Activated naive CD4-positive, alpha-beta T cell treated with anti-CD3 and anti-CD28 coated beads, Interleukin-2, amount 10 ng/mL, durations not matched to agents 7 days and 5 days (primary cell): ENCODE measurements at regions of chr3 and their contacts with region 1.

Region 1: DNA sequence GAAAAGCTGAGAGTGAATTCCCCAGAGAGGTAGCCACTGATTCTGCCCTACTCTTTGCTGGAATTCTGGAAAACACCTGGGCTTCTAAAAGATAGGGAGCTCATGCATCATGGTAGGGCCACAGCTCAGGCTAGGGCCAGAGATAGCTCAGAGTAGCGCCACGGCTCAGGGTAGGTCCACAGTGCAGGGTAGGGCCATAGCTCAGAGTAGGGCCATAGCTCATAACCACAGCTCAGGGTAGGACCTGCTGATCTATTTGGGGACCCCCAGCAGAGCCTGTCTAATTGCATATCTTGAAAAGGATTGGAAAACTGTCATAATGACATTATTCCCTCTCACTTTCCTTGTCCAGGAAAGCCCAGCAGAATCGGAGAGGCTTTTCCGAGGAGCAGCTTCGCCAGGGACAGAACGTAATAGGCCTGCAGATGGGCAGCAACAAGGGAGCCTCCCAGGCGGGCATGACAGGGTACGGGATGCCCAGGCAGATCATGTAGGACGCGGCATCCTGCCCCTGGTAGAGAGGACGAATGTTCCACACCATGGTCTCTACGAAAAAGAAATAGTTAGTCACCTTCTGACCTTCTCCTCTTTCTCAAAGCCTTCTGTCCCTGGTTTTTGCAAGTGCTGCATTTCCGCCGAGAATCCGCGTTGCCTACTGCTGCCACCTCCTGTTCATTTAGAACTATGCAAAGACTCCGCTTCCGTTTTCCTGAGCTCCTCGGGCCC is 14.5 kb downstream of the TAGLN3 start:
- DNase-seq: peak; percentile 67
- H3K4me3 Mint-ChIP-seq: no peak overlapping the region
- H3K27ac Mint-ChIP-seq: no peak overlapping the region
- H3K4me1 Mint-ChIP-seq: peaks cover 13% of the 10 kb centered on the region
- H3K27me3 Mint-ChIP-seq: no peaks in the 10 kb centered on the region

Region 2: DNA sequence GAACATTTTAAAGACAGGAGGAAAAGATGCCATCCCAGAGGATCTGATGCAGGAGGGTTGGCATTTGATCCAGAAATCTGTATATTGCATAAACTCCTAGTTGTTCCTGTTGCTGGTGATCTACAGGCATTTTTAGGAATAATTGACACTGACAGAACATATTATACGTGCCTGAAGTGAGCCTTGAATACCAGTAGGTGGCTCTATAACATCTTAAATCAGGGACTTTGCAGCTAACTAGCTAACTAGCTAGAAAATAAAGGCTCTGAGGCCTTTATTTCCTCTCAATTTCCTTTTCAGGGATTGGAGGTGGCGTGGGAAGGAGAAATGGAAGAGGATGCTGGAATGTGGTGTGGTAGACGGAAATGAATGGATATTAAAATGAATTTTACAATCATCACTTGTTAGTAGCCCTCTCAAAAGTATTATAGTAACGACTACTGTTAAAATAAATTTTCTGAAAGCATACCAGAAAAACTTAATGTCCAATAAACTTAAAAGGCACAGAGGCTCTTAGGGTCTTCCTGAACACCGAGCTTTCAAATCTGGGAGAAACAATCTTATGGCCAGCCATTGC is 344.2 kb before region 1 on chr3:
- CTCF ChIA-PET with region 1: interaction called, 19 read pairs
- DNase-seq: no peak
- H3K4me3 Mint-ChIP-seq: no peak overlapping the region
- H3K27ac Mint-ChIP-seq: peak overlapping the region; percentile 83
- H3K4me1 Mint-ChIP-seq: peaks cover 85% of the 10 kb centered on the region
- H3K27me3 Mint-ChIP-seq: no peaks in the 10 kb centered on the region

Region 3: GRCh38 chr3:111967651-111968274 is 45.5 kb before region 1 on chr3:
- CTCF ChIA-PET with region 1: interaction called, 37 read pairs
- DNase-seq: peak; percentile 87
- H3K4me3 Mint-ChIP-seq: no peak overlapping the region
- H3K27ac Mint-ChIP-seq: no peak overlapping the region
- H3K4me1 Mint-ChIP-seq: peaks cover 9% of the 10 kb centered on the region
- H3K27me3 Mint-ChIP-seq: peaks cover 5% of the 10 kb centered on the region

Region 4: GRCh38 chr3:111978493-111979433 is 34.5 kb before region 1 on chr3 and contains the start of gene ABHD10:
- CTCF ChIA-PET with region 1: interaction called, 42 read pairs
- DNase-seq: peak; percentile 98
- H3K4me3 Mint-ChIP-seq: peak within 1 kb of the TSS; percentile 87
- H3K27ac Mint-ChIP-seq: peak within 1 kb of the TSS; percentile 96
- H3K4me1 Mint-ChIP-seq: peaks cover 41% of the 10 kb centered on the region
- H3K27me3 Mint-ChIP-seq: peaks cover 12% of the 10 kb centered on the region

Region 5: DNA sequence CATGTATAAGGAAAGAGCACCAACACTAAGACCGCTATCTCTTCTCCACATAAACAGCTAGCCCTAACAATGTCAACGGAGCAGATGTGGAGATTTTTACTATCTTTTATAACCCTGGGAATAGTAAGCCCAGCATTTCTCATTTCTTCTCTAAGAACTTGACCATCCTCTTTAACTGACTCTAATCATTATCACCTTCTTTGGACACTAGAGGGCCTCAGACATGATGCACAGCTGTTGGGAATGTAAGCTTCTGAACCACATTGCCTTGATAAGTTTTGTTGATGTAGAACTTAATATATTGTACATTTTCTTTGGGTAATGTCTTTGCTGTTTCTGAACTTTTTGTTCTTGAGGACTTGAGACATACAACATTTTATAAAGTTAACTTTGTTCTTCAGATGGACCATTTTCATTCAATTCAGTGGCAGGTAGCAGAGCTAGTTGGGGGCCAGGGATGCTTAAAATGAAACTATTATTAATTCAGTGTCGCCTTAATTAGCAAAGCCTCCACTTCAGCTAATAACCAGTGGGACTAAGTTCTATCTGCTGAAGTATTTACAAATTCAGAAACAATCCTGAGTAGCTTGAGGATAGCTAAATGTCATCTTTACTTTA is 24.1 kb before region 1 on chr3:
- CTCF ChIA-PET with region 1: interaction called, 137 read pairs
- DNase-seq: no peak
- H3K4me3 Mint-ChIP-seq: no peak overlapping the region
- H3K27ac Mint-ChIP-seq: no peak overlapping the region
- H3K4me1 Mint-ChIP-seq: peaks cover 23% of the 10 kb centered on the region
- H3K27me3 Mint-ChIP-seq: no peaks in the 10 kb centered on the region

Region 6: GRCh38 chr3:111998636-111999483 is 14.4 kb before region 1 on chr3 and contains the start of gene TAGLN3:
- CTCF ChIA-PET with region 1: interaction called, 55 read pairs
- DNase-seq: no peak
- H3K4me3 Mint-ChIP-seq: peak within 1 kb of the TSS; percentile 60
- H3K27ac Mint-ChIP-seq: no peak within 1 kb of the TSS
- H3K4me1 Mint-ChIP-seq: peaks cover 31% of the 10 kb centered on the region
- H3K27me3 Mint-ChIP-seq: peaks cover 14% of the 10 kb centered on the region

Region 7: GRCh38 chr3:112043603-112044201 is 30.5 kb after region 1 on chr3:
- CTCF ChIA-PET with region 1: interaction called, 37 read pairs
- DNase-seq: peak; percentile 54
- H3K4me3 Mint-ChIP-seq: no peak overlapping the region
- H3K27ac Mint-ChIP-seq: no peak overlapping the region
- H3K4me1 Mint-ChIP-seq: no peaks in the 10 kb centered on the region
- H3K27me3 Mint-ChIP-seq: peaks cover 4% of the 10 kb centered on the region

Region 8: GRCh38 chr3:112425858-112426750 is 412.9 kb after region 1 on chr3:
- CTCF ChIA-PET with region 1: no interaction called
- DNase-seq: no peak
- H3K4me3 Mint-ChIP-seq: no peak overlapping the region
- H3K27ac Mint-ChIP-seq: no peak overlapping the region
- H3K4me1 Mint-ChIP-seq: no peaks in the 10 kb centered on the region
- H3K27me3 Mint-ChIP-seq: peaks cover 21% of the 10 kb centered on the region